Common myeloid progenitor, CD34-positive (primary cell): ENCODE measurements at regions of chr2 and their contacts with region 1.

Region 1: GRCh38 chr2:158034199-158034866 is 67.3 kb upstream of the UPP2 start:
- DNase-seq: peak; percentile 63 to 87 (median 78)
- H3K4me3 ChIP-seq: no peak overlapping the region
- H3K27ac ChIP-seq: no peak overlapping the region
- H3K4me1 ChIP-seq: no peaks in the 10 kb centered on the region
- H3K27me3 ChIP-seq: no peaks in the 10 kb centered on the region

Region 2: DNA sequence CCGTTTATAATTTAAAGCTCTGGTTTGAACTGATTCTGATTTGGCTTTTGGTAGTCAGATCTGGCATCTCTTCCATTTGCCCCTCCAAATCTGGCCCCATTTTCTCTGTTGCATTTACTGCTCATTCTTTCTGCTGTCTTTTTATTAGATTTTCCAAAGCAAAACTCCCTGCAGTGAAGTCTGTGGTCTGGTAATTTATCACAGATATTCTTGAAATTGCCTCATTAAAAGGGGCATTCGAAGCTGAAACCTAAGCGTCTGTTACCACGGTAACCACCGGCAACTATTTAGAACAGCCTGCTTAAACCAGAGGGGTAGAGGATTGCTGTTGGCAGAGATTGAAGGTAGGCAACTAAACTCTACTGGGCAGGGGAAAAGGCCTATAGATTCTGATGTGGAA is 44.2 kb before region 1 on chr2:
- CTCF ChIA-PET with region 1: no interaction called
- POLR2A ChIA-PET with region 1: no interaction called
- DNase-seq: no peak
- H3K4me3 ChIP-seq: no peak overlapping the region
- H3K27ac ChIP-seq: no peak overlapping the region
- H3K4me1 ChIP-seq: no peaks in the 10 kb centered on the region
- H3K27me3 ChIP-seq: no peaks in the 10 kb centered on the region

Region 3: DNA sequence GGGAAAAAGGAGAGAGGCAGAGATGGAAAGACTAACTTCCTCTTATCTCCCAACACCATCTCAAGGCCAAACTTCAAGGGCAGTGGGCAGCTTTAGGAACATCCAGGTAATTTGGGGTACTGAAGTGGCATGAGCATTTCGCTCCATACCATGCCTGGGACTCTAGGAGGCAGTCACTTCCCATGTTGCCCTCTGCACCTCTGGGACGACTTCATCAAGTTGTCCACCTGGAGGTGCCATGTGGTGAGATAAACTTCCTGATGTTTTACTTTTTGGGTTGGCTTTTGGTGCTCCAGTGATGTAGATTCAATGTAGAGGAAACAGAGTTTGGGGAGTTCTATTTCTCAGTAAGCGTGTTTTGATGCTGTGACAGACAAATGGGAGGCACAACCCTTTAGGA is 11.0 kb after region 1 on chr2:
- CTCF ChIA-PET with region 1: interaction called, 15 read pairs
- POLR2A ChIA-PET with region 1: interaction called, 4 read pairs
- DNase-seq: no peak
- H3K4me3 ChIP-seq: no peak overlapping the region
- H3K27ac ChIP-seq: no peak overlapping the region
- H3K4me1 ChIP-seq: peaks cover 0 to 25% (median 13%) of the 10 kb centered on the region in 4 experiments
- H3K27me3 ChIP-seq: no peaks in the 10 kb centered on the region

Region 4: GRCh38 chr2:158060862-158061435 is 26.6 kb after region 1 on chr2:
- CTCF ChIA-PET with region 1: no interaction called
- POLR2A ChIA-PET with region 1: no interaction called
- DNase-seq: no peak
- H3K4me3 ChIP-seq: no peak overlapping the region
- H3K27ac ChIP-seq: no peak overlapping the region
- H3K4me1 ChIP-seq: no peaks in the 10 kb centered on the region
- H3K27me3 ChIP-seq: no peaks in the 10 kb centered on the region

Region 5: GRCh38 chr2:158745044-158745865 is 710.9 kb after region 1 on chr2:
- CTCF ChIA-PET with region 1: interaction called, 135 read pairs
- POLR2A ChIA-PET with region 1: no interaction called
- DNase-seq: peak; percentile 67 to 85 (median 82)
- H3K4me3 ChIP-seq: no peak overlapping the region
- H3K27ac ChIP-seq: no peak overlapping the region
- H3K4me1 ChIP-seq: no peaks in the 10 kb centered on the region
- H3K27me3 ChIP-seq: peaks cover 0 to 9% (median 4%) of the 10 kb centered on the region in 5 experiments

Region 6: DNA sequence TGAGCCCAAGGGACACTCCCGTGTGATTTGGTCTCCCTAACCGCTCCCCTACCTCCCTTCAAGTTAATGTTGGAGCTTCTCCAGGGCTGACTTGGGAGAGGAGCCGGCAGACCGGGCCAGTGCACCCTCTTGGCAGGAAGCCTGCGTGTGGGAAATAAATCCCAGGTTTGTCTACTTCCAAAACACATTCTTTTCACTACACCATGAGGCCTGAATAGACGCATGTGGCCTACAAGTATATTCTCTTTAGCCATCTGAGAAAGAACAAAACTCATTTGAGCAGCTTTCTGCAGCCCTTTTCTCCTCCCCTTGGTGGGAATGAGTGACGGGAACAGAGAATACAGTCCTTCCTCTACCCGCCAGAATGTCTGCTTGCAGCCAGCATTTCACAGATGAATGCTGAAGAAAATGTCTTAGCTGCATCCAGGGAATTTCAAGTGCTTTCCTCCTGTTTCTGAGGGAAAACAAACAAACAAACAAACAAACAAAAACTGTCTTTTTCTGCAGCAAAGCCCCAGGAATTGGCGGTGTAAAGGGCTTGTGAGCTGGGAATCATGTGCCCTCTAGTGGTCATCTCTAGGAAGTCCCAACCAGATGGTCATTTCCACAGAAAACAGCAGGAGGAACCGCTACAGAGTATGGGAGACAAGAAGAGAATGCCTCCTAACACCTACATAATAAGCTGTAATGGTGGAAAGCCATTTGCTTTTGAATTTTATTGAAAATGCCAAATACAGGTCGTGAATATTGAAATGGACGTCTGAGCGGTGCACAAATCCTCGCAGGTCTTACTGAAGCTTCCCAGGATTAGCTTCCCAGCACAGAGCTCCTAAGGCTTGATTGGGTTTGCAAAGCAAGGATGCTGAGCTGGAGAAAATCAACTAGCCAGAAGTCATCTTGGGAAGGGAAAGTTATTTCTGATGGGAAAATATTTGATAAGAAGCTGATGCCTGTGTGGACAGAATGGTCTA is 719.6 kb after region 1 on chr2:
- CTCF ChIA-PET with region 1: interaction called, 135 read pairs
- POLR2A ChIA-PET with region 1: no interaction called
- DNase-seq: peak; percentile 61 to 79 (median 72)
- H3K4me3 ChIP-seq: no peak overlapping the region
- H3K27ac ChIP-seq: no peak overlapping the region
- H3K4me1 ChIP-seq: no peaks in the 10 kb centered on the region
- H3K27me3 ChIP-seq: no peaks in the 10 kb centered on the region